Caco-2 (cell line): ENCODE measurements at regions of chr4 and their contacts with region 1.

Region 1: DNA sequence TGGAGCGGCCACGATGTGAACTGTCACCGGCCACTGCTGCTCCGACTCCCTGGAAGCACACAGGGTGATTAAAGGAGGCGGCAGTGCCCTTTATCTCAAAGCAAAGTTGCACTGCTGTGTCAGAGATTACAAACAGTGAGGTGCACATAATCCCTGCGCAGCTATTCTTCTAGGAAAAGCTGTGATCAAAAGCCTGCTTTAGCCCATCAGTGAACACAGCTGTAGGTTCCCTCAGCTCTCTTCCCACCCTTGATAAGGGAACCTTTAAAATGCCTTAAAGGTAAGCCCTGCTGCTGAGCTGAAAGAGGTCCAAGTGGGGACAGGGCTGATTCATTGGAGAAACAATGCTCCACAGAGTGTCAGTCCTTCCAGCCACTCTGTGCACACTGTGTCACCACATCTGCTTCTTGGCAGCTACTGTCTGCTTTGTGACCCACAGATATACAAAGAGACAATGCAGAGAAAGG is 127.6 kb downstream of the EIF4E start:
- DNase-seq: peak; percentile 78 to 88
- H3K4me3 ChIP-seq: no peak overlapping the region
- H3K4me3 Mint-ChIP-seq: peak overlapping the region; percentile 69
- H3K27ac Mint-ChIP-seq: peak overlapping the region; percentile 92
- H3K4me1 ChIP-seq: peaks cover 50% of the 10 kb centered on the region
- H3K4me1 Mint-ChIP-seq: peaks cover 39% of the 10 kb centered on the region
- H3K27me3 ChIP-seq: no peaks in the 10 kb centered on the region
- H3K27me3 Mint-ChIP-seq: no peaks in the 10 kb centered on the region
- CTCF ChIP-seq: no peak

Region 2: GRCh38 chr4:98577956-98578355 is 223.3 kb before region 1 on chr4:
- CTCF ChIA-PET with region 1: no interaction called
- POLR2A ChIA-PET with region 1: no interaction called
- intact Hi-C with region 1: no loop called
- DNase-seq: no peak
- H3K4me3 ChIP-seq: no peak overlapping the region
- H3K4me3 Mint-ChIP-seq: no peak overlapping the region
- H3K27ac Mint-ChIP-seq: no peak overlapping the region
- H3K4me1 ChIP-seq: no peaks in the 10 kb centered on the region
- H3K4me1 Mint-ChIP-seq: peaks cover 7% of the 10 kb centered on the region
- H3K27me3 ChIP-seq: no peaks in the 10 kb centered on the region
- H3K27me3 Mint-ChIP-seq: no peaks in the 10 kb centered on the region
- CTCF ChIP-seq: no peak

Region 3: GRCh38 chr4:98688411-98689290 is 112.6 kb before region 1 on chr4:
- CTCF ChIA-PET with region 1: no interaction called
- POLR2A ChIA-PET with region 1: interaction called, 4 read pairs
- intact Hi-C with region 1: loop called (anchors 1 kb)
- DNase-seq: no peak
- H3K4me3 ChIP-seq: no peak overlapping the region
- H3K4me3 Mint-ChIP-seq: no peak overlapping the region
- H3K27ac Mint-ChIP-seq: no peak overlapping the region
- H3K4me1 ChIP-seq: peaks cover 24% of the 10 kb centered on the region
- H3K4me1 Mint-ChIP-seq: peaks cover 34% of the 10 kb centered on the region
- H3K27me3 ChIP-seq: no peaks in the 10 kb centered on the region
- H3K27me3 Mint-ChIP-seq: no peaks in the 10 kb centered on the region
- CTCF ChIP-seq: no peak

Region 4: GRCh38 chr4:98778206-98778605 is 23.1 kb before region 1 on chr4:
- CTCF ChIA-PET with region 1: no interaction called
- POLR2A ChIA-PET with region 1: interaction called, 5 read pairs
- intact Hi-C with region 1: loop called (anchors 1 kb)
- DNase-seq: peak in 1 of 2 experiments; percentile 49
- H3K4me3 ChIP-seq: no peak overlapping the region
- H3K4me3 Mint-ChIP-seq: no peak overlapping the region
- H3K27ac Mint-ChIP-seq: peak overlapping the region; percentile 69
- H3K4me1 ChIP-seq: peaks cover 47% of the 10 kb centered on the region
- H3K4me1 Mint-ChIP-seq: peaks cover 44% of the 10 kb centered on the region
- H3K27me3 ChIP-seq: no peaks in the 10 kb centered on the region
- H3K27me3 Mint-ChIP-seq: no peaks in the 10 kb centered on the region
- CTCF ChIP-seq: no peak

Region 5: DNA sequence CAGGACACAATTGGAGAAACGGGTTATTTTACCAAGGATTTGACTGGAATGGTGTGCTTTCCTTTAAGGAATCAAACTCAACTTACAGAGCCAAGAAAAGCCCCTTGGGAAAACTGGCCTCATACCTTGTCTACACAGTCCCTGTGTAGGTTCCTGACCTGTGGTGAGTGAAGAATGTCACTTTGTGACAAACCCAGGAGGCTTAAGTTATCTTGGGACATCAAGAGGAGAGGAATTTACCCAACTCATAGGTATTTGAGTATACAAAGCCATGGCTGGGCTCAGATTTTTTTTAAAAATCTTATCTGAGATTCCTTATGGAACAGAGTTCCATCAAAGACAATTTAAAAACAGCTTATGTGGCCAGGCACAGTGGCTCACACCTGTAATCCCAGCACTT is 15.5 kb after region 1 on chr4:
- CTCF ChIA-PET with region 1: interaction called, 3 read pairs
- POLR2A ChIA-PET with region 1: interaction called, 12 read pairs
- intact Hi-C with region 1: loop called (anchors 1 kb)
- DNase-seq: peak; percentile 81 to 84
- H3K4me3 ChIP-seq: no peak overlapping the region
- H3K4me3 Mint-ChIP-seq: no peak overlapping the region
- H3K27ac Mint-ChIP-seq: peak overlapping the region; percentile 94
- H3K4me1 ChIP-seq: peaks cover 42% of the 10 kb centered on the region
- H3K4me1 Mint-ChIP-seq: peaks cover 39% of the 10 kb centered on the region
- H3K27me3 ChIP-seq: no peaks in the 10 kb centered on the region
- H3K27me3 Mint-ChIP-seq: no peaks in the 10 kb centered on the region
- CTCF ChIP-seq: no peak

Region 6: DNA sequence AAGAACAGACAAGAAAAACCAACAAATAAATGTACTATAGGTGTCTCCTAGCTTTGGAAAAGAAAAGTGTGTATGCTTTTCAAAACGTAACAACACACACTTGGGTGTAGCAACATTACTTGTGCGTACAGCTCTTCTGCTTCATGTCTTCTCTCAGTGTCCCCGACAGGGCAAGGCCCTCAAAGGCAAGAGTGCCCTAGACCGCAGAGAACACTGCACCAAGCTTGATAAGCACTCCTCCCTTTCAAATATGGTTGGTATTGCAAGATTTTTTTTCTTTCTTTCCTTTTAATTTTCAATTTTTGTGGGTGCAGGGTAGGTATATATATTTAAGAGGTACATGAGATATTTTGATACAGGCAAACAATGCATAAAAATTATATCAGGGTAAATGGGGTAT is 20.9 kb after region 1 on chr4:
- CTCF ChIA-PET with region 1: interaction called, 3 read pairs
- POLR2A ChIA-PET with region 1: interaction called, 12 read pairs
- intact Hi-C with region 1: loop called (anchors 1 kb)
- DNase-seq: no peak
- H3K4me3 ChIP-seq: no peak overlapping the region
- H3K4me3 Mint-ChIP-seq: no peak overlapping the region
- H3K27ac Mint-ChIP-seq: no peak overlapping the region
- H3K4me1 ChIP-seq: peaks cover 34% of the 10 kb centered on the region
- H3K4me1 Mint-ChIP-seq: peaks cover 34% of the 10 kb centered on the region
- H3K27me3 ChIP-seq: no peaks in the 10 kb centered on the region
- H3K27me3 Mint-ChIP-seq: no peaks in the 10 kb centered on the region
- CTCF ChIP-seq: no peak

Region 7: GRCh38 chr4:98873059-98873458 is 71.8 kb after region 1 on chr4:
- CTCF ChIA-PET with region 1: no interaction called
- POLR2A ChIA-PET with region 1: no interaction called
- intact Hi-C with region 1: no loop called
- DNase-seq: no peak
- H3K4me3 ChIP-seq: no peak overlapping the region
- H3K4me3 Mint-ChIP-seq: no peak overlapping the region
- H3K27ac Mint-ChIP-seq: no peak overlapping the region
- H3K4me1 ChIP-seq: no peaks in the 10 kb centered on the region
- H3K4me1 Mint-ChIP-seq: peaks cover 7% of the 10 kb centered on the region
- H3K27me3 ChIP-seq: no peaks in the 10 kb centered on the region
- H3K27me3 Mint-ChIP-seq: no peaks in the 10 kb centered on the region
- CTCF ChIP-seq: no peak

Region 8: DNA sequence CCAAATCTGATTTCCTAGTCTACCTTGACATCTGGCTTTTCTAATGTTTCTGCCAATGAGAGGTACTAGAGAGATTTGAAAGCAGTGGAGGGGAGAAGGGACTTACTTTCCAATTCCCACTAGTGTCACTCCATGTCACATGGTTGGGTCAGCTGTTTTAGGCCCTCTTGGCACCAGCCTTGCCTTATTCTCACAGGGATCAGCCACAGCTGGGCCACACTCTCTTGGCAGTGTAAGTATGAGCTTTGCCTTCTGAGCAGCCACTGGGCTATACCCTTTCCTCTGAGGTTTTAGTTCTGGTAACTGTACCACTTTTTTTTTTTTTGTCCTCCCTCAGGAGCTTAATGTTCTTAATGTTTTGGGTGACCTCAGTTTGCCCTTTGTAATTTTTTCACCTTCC is 561.5 kb after region 1 on chr4:
- CTCF ChIA-PET with region 1: no interaction called
- POLR2A ChIA-PET with region 1: no interaction called
- intact Hi-C with region 1: no loop called
- DNase-seq: no peak
- H3K4me3 ChIP-seq: no peak overlapping the region
- H3K4me3 Mint-ChIP-seq: no peak overlapping the region
- H3K27ac Mint-ChIP-seq: no peak overlapping the region
- H3K4me1 ChIP-seq: no peaks in the 10 kb centered on the region
- H3K4me1 Mint-ChIP-seq: no peaks in the 10 kb centered on the region
- H3K27me3 ChIP-seq: no peaks in the 10 kb centered on the region
- H3K27me3 Mint-ChIP-seq: no peaks in the 10 kb centered on the region
- CTCF ChIP-seq: no peak